ENCODE measurements at regions of chr15 and their contacts with region 1.

Region 1: GRCh38 chr15:84929744-84930371 is 45.4 kb downstream of the SLC28A1 start:
- DNase-seq: peak; percentile 85
- H3K4me3 ChIP-seq: no peak overlapping the region
- H3K27ac ChIP-seq: peak overlapping the region in 2 of 4 donors; percentile 14 to 39
- H3K4me1 ChIP-seq: peaks cover 0 to 17% (median 12%) of the 10 kb centered on the region in 4 donors
- H3K27me3 ChIP-seq: no peaks in the 10 kb centered on the region
- CTCF ChIP-seq: no peak
- EP300 ChIP-seq: no peak
- POLR2A ChIP-seq: no peak

Region 2: GRCh38 chr15:84588053-84588874 is 341.6 kb before region 1 on chr15:
- in situ Hi-C with region 1: no loop called
- intact Hi-C with region 1: loop called (anchors 5 kb)
- DNase-seq: peak; percentile 91
- H3K4me3 ChIP-seq: peak overlapping the region in 2 of 4 donors; percentile 4 to 28
- H3K27ac ChIP-seq: no peak overlapping the region
- H3K4me1 ChIP-seq: peaks cover 0 to 7% (median 4%) of the 10 kb centered on the region in 4 donors
- H3K27me3 ChIP-seq: no peaks in the 10 kb centered on the region
- CTCF ChIP-seq: peak; percentile 58 to 94 (median 92)
- EP300 ChIP-seq: no peak
- POLR2A ChIP-seq: no peak

Region 3: DNA sequence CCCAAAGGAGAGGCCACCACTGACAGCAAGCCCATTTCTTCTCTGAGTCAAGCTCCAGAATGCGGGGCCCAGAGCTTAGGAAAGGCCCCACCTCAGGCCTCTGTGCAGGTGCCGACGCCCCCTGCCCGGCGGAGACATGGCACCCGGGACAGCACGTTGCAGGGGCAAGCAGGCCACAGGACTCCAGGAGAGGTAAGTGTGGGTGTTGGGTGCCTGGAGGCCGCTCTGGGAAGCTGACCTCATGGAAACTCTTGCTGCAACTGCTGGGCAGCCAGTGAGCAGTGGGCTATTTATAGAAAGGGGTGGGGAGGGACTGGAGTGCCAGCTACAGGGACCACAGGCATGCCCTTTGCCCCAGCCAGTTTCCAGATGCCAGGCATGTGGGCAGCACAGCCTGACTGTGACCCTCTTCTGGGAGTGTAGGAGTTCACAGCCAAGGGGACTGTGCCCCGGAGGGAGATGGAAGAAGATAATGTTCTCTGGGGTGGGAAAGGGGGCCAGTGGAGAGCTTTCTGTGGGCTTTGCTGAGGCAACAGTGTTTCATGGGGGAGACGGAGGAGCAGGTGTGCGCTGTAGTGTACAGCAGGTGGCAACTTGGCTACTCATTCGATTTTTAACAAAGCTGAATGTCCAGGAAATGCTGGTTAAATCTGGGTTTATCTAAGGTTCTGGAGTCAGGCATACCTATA is 89.0 kb before region 1 on chr15:
- in situ Hi-C with region 1: no loop called
- intact Hi-C with region 1: loop called (anchors 5 kb)
- DNase-seq: peak; percentile 64
- H3K4me3 ChIP-seq: no peak overlapping the region
- H3K27ac ChIP-seq: peak overlapping the region; percentile 71 to 81 (median 76)
- H3K4me1 ChIP-seq: peaks cover 14 to 23% (median 19%) of the 10 kb centered on the region in 4 donors
- H3K27me3 ChIP-seq: no peaks in the 10 kb centered on the region
- CTCF ChIP-seq: no peak
- EP300 ChIP-seq: peak; percentile 84
- POLR2A ChIP-seq: no peak